A673 (cell line): ENCODE measurements at regions of chr3 and their contacts with region 1.

Region 1: DNA sequence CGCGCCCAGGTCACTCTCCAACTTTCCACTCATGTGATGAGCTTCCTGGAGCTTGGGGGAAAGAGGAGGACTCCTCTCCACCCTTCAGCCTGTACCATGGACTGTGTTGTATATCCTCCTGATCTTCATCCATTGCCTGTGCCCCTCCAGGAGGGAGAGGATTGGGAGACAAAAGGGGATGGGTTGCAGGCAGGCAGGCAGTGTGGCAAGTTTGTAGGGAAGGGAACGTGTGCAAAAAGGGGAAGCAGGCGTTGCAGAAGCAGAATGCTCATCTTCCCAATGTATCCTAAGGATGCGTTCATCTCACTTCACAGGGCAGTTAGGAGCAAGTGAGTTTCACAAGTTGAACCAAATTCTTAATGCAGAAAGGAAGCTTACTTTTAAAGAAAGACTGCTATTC is 28.1 kb upstream of the GHSR start:
- DNase-seq: no peak
- H3K4me3 ChIP-seq: peak overlapping the region; percentile 48
- H3K27ac ChIP-seq: no peak overlapping the region
- H3K4me1 ChIP-seq: no peaks in the 10 kb centered on the region
- H3K27me3 ChIP-seq: no peaks in the 10 kb centered on the region
- CTCF ChIP-seq: no peak

Region 2: DNA sequence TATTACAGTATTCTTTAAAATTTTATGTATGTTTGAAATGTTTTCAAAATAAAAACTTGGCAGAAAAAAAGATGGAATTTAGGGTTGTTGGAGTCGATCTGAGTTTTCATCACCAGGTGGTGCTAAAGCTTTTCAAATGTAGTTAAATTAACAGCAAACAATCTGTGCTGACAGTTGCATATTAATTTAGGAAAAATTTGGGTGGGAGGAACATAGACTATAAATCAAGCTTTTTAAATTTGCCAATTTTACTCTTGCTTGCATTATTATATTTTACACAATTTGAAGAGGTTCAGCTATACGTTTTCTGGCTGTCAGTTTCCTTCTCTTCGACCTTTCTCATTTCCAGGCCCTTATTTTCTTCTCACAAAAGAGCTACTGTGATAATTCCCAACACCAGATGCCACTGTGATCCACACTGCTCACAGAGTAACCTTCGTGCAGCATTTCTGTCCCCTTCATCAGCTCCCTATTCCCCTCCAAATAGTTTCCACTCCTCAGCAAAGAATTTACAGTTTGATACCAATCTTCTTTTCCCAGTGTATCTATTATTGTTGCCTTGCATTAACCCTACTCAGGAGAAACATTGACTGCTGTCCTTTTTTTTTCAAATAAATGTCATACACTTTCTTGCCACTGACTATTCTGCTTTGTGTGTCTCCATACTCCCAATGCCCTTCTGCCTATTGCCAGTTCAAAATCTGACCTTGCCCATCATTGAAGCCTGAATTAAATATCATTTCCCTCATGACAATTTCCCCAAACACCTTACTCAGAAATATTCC is 1514.5 kb before region 1 on chr3:
- CTCF ChIA-PET with region 1: no interaction called
- POLR2A ChIA-PET with region 1: no interaction called
- intact Hi-C with region 1: loop called (anchors 10 kb)
- DNase-seq: peak; percentile 41
- H3K4me3 ChIP-seq: no peak overlapping the region
- H3K27ac ChIP-seq: no peak overlapping the region
- H3K4me1 ChIP-seq: no peaks in the 10 kb centered on the region
- H3K27me3 ChIP-seq: no peaks in the 10 kb centered on the region
- CTCF ChIP-seq: peak; percentile 70

Region 3: DNA sequence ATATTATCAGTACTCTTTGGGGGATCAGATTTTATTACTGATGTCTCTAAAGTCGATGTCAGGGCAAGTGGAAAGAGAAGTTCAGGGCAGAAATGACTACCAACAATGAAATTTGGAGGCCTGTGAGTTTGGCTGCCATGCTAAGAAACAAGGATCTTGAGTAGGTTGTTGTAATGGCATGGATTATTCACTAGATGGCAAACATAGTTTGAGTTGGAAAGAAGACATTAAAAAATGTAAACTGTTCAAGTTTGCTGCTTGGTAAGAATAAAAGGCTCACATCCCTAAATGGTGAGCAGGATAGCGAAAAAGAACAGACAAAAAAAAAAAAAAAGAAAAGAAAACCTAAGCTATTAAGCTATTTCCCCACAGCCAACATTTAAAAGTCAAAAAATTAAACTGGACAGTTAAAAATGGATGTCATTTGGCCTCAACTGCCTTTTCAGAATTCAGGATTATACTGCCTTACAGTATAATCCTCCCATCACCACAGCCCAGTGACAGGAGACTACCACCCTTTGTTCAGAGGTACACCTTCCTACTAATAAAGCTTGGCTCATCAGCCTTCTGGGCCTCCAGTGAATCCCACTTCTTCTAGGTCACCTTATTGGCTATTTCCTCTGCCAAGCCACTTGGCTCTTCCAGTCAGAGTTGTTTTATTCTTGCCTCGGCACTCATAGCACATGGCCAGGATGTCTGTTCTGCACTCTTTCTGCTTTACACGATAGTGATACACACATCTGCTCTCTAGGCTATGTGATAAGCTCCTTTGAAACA is 829.8 kb before region 1 on chr3:
- CTCF ChIA-PET with region 1: no interaction called
- POLR2A ChIA-PET with region 1: no interaction called
- intact Hi-C with region 1: loop called (anchors 2 kb)
- DNase-seq: peak; percentile 61
- H3K4me3 ChIP-seq: no peak overlapping the region
- H3K27ac ChIP-seq: no peak overlapping the region
- H3K4me1 ChIP-seq: no peaks in the 10 kb centered on the region
- H3K27me3 ChIP-seq: no peaks in the 10 kb centered on the region
- CTCF ChIP-seq: peak; percentile 61

Region 4: GRCh38 chr3:172129870-172130683 is 346.3 kb before region 1 on chr3:
- CTCF ChIA-PET with region 1: no interaction called
- POLR2A ChIA-PET with region 1: no interaction called
- intact Hi-C with region 1: no loop called
- DNase-seq: no peak
- H3K4me3 ChIP-seq: no peak overlapping the region
- H3K27ac ChIP-seq: no peak overlapping the region
- H3K4me1 ChIP-seq: peaks cover 47% of the 10 kb centered on the region
- H3K27me3 ChIP-seq: no peaks in the 10 kb centered on the region
- CTCF ChIP-seq: no peak

Region 5: DNA sequence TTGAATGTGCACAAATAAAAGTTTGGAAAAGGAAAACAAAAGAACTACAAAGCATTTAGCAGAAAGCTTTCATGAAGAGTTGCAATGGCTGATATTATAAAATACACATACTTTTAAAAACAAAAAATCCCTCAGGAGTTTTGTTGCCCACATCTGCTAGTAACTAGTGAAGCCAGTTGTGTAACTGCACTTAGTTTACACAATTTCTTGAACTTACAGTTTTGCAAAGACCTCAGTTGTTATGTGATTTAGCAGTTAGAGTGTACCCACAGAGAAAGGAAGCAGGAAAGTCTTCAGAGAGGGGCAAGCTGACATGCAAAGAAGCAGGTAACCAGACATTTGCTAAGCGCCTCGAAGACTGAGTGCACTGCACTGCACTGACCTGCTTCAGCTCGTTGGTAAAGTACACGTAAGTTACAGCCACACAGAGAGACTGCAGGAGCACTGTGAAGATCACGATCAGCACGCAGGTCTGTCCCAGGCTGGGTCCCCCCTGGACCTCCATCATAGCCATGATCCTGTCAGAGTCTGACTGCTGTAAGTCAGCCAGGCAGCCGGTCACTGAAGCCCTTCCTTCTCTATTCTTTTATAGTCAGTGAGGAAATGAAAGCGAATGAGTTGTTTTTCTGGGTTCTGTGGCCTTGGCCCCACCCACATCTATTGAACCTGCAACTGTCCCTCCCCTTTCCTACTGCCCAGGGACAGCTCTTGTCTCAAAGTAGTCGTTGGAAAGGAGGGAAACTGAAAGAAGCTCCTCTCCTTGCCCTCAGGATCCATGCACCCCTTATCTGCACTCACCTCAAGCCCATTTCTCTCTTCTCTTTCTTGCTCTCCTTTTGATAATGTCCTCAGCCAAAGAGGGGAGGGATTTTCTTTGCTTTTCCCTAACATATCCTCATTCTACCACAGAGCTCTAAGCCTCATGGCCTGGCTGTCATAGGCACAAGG is 46.8 kb after region 1 on chr3 and contains the start of gene TNFSF10:
- CTCF ChIA-PET with region 1: no interaction called
- POLR2A ChIA-PET with region 1: no interaction called
- intact Hi-C with region 1: no loop called
- DNase-seq: no peak
- H3K4me3 ChIP-seq: no peak within 1 kb of the TSS
- H3K27ac ChIP-seq: no peak within 1 kb of the TSS
- H3K4me1 ChIP-seq: no peaks in the 10 kb centered on the region
- H3K27me3 ChIP-seq: no peaks in the 10 kb centered on the region
- CTCF ChIP-seq: no peak
- total RNA-seq, gene TNFSF10: not detected in 2 replicates